Mammary epithelial cell (primary cell): ENCODE measurements at regions of chr18 and their contacts with region 1.

Region 1: GRCh38 chr18:45014047-45014501 is 333.4 kb downstream of the SETBP1 start:
- DNase-seq: peak; percentile 91
- H3K4me3 ChIP-seq: no peak overlapping the region
- H3K27ac ChIP-seq: no peak overlapping the region
- H3K4me1 ChIP-seq: peaks cover 48% of the 10 kb centered on the region
- H3K27me3 ChIP-seq: no peaks in the 10 kb centered on the region
- CTCF ChIP-seq: peak; percentile 30 to 42

Region 2: DNA sequence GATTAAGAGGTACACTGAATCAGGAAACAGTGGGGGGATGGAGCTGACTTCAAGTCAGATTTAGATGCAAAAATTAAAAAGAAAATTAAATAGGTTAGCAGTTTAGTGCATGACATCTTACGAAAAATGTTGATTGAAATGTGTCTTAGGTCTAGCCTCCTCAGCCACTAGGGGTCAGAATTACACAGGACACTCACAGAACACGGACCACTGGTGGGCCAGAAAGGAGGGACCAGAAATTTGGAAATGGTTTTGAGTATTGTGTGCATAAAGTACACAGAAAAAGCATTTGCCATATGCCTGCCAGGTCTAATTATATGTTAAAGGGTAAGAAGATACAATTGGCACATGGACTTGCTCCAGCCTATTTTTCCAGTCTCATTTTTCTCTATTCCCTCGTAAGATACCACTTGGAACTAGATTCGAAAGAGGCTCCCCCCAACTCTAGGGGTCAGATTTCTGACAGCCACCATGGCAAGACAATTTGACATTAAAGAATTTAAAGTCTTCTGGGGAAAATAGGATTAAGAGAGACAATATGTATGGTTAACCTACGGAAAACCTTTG is 883.6 kb before region 1 on chr18:
- CTCF ChIA-PET with region 1: no interaction called
- dilution Hi-C with region 1: no loop called
- in situ Hi-C with region 1: no loop called
- intact Hi-C with region 1: loop called (anchors 10 kb)
- DNase-seq: peak; percentile 26
- H3K4me3 ChIP-seq: no peak overlapping the region
- H3K27ac ChIP-seq: no peak overlapping the region
- H3K4me1 ChIP-seq: no peaks in the 10 kb centered on the region
- H3K27me3 ChIP-seq: no peaks in the 10 kb centered on the region
- CTCF ChIP-seq: peak; percentile 85 to 87

Region 3: GRCh38 chr18:44458777-44459176 is 555.3 kb before region 1 on chr18:
- CTCF ChIA-PET with region 1: no interaction called
- dilution Hi-C with region 1: no loop called
- in situ Hi-C with region 1: no loop called
- intact Hi-C with region 1: no loop called
- DNase-seq: peak; percentile 91
- H3K4me3 ChIP-seq: no peak overlapping the region
- H3K27ac ChIP-seq: peak overlapping the region; percentile 24
- H3K4me1 ChIP-seq: no peaks in the 10 kb centered on the region
- H3K27me3 ChIP-seq: no peaks in the 10 kb centered on the region
- CTCF ChIP-seq: peak in 1 of 2 donors; percentile 39

Region 4: GRCh38 chr18:44901283-44901682 is 112.8 kb before region 1 on chr18:
- CTCF ChIA-PET with region 1: no interaction called
- dilution Hi-C with region 1: no loop called
- in situ Hi-C with region 1: no loop called
- intact Hi-C with region 1: loop called (anchors 2 kb)
- DNase-seq: no peak
- H3K4me3 ChIP-seq: no peak overlapping the region
- H3K27ac ChIP-seq: no peak overlapping the region
- H3K4me1 ChIP-seq: peaks cover 14% of the 10 kb centered on the region
- H3K27me3 ChIP-seq: no peaks in the 10 kb centered on the region
- CTCF ChIP-seq: peak; percentile 25 to 40

Region 5: DNA sequence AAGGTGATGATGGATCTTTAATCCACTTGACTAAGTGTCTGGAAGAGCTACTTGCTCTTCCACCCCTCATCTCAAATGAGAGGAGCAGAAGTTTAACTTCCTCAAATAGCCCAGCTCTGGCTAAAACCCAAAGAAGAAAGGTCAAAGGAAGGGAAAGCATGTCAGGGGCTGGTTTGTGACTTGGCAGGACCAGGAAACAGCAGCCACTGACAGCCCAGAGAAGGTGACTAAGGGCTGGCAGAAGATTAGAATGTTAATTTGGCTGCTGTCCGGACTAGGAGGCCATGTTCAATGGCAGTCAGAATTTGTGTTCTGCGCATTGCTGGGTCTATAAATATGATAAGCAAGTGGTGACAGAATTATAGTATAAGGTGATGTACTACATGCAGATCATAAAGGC is 52.8 kb after region 1 on chr18:
- CTCF ChIA-PET with region 1: no interaction called
- dilution Hi-C with region 1: no loop called
- in situ Hi-C with region 1: no loop called
- intact Hi-C with region 1: no loop called
- DNase-seq: no peak
- H3K4me3 ChIP-seq: no peak overlapping the region
- H3K27ac ChIP-seq: no peak overlapping the region
- H3K4me1 ChIP-seq: no peaks in the 10 kb centered on the region
- H3K27me3 ChIP-seq: no peaks in the 10 kb centered on the region
- CTCF ChIP-seq: no peak

Region 6: GRCh38 chr18:45169610-45170009 is 155.5 kb after region 1 on chr18:
- CTCF ChIA-PET with region 1: no interaction called
- dilution Hi-C with region 1: no loop called
- in situ Hi-C with region 1: no loop called
- intact Hi-C with region 1: loop called (anchors 5 kb)
- DNase-seq: peak; percentile 87
- H3K4me3 ChIP-seq: no peak overlapping the region
- H3K27ac ChIP-seq: peak overlapping the region; percentile 96
- H3K4me1 ChIP-seq: peaks cover 49% of the 10 kb centered on the region
- H3K27me3 ChIP-seq: no peaks in the 10 kb centered on the region
- CTCF ChIP-seq: peak; percentile 19 to 28